ENCODE measurements at regions of chr21 and their contacts with region 1.

Region 1: GRCh38 chr21:19648376-19648775 is 1244.8 kb upstream of the TMPRSS15 start:
- DNase-seq: no peak
- ATAC-seq: no peak
- H3K4me3 ChIP-seq: no peak overlapping the region
- H3K4me3 Mint-ChIP-seq: no peak overlapping the region
- H3K27ac ChIP-seq: no peak overlapping the region
- H3K27ac Mint-ChIP-seq: no peak overlapping the region
- H3K4me1 ChIP-seq: no peaks in the 10 kb centered on the region
- H3K4me1 Mint-ChIP-seq: no peaks in the 10 kb centered on the region
- H3K27me3 ChIP-seq: no peaks in the 10 kb centered on the region
- H3K27me3 Mint-ChIP-seq: no peaks in the 10 kb centered on the region
- CTCF ChIP-seq: no peak

Region 2: DNA sequence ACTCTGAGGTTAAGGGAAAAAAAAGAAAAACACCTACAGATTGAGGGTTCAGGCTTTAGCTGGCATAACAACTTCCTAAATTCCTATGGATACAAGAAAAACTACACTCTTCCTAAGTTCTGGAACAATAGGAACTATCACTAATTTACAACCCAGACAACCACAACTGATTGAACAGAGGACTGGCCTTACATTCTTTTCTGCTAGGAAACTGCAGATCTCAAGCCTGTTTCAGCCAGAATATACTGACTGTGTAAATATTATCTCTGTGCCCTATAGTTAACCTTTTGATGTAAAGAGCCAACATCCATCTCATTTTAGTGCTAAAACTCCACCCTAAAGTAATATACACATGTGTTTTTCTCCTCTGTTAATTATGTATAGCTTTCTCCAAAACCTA is 58.3 kb before region 1 on chr21:
- CTCF ChIA-PET with region 1: no interaction called
- POLR2A ChIA-PET with region 1: no interaction called
- intact Hi-C with region 1: loop called (anchors 10 kb)
- DNase-seq: no peak
- ATAC-seq: no peak
- H3K4me3 ChIP-seq: no peak overlapping the region
- H3K4me3 Mint-ChIP-seq: no peak overlapping the region
- H3K27ac ChIP-seq: no peak overlapping the region
- H3K27ac Mint-ChIP-seq: no peak overlapping the region
- H3K4me1 ChIP-seq: no peaks in the 10 kb centered on the region
- H3K4me1 Mint-ChIP-seq: no peaks in the 10 kb centered on the region
- H3K27me3 ChIP-seq: no peaks in the 10 kb centered on the region
- H3K27me3 Mint-ChIP-seq: no peaks in the 10 kb centered on the region
- CTCF ChIP-seq: no peak